GM12878 (cell line): ENCODE measurements at regions of chr12 and their contacts with region 1.

Region 1: GRCh38 chr12:91811481-91812287 is 334.0 kb downstream of the BTG1 start:
- DNase-seq: peak; percentile 40
- ATAC-seq: peak; percentile 95
- H3K4me3 ChIP-seq: no peak overlapping the region
- H3K27ac ChIP-seq: no peak overlapping the region
- H3K4me1 ChIP-seq: no peaks in the 10 kb centered on the region
- H3K27me3 ChIP-seq: no peaks in the 10 kb centered on the region
- CTCF ChIP-seq: peak; percentile 68 to 86 (median 79)
- EP300 ChIP-seq: no peak
- POLR2A ChIP-seq: no peak
- RAD21 ChIP-seq: peak; percentile 87

Region 2: GRCh38 chr12:91382081-91382543 is 429.6 kb before region 1 on chr12:
- CTCF ChIA-PET with region 1: interaction called, 23 read pairs
- POLR2A ChIA-PET with region 1: no interaction called
- RAD21 ChIA-PET with region 1: interaction called, 16 read pairs
- SMC1A ChIA-PET with region 1: interaction called, 17 read pairs
- in situ Hi-C with region 1: no loop called
- intact Hi-C with region 1: no loop called
- DNase-seq: peak; percentile 54
- ATAC-seq: peak; percentile 95
- H3K4me3 ChIP-seq: peak overlapping the region; percentile 68
- H3K27ac ChIP-seq: peak overlapping the region; percentile 37; the same call in 1 of the 2 replicates
- H3K4me1 ChIP-seq: peaks cover 3% of the 10 kb centered on the region; the same call in 1 of the 2 replicates
- H3K27me3 ChIP-seq: no peaks in the 10 kb centered on the region
- CTCF ChIP-seq: peak; percentile 80 to 89 (median 87)
- EP300 ChIP-seq: no peak
- POLR2A ChIP-seq: no peak
- RAD21 ChIP-seq: peak; percentile 92

Region 3: GRCh38 chr12:91801048-91801447 is 10.6 kb before region 1 on chr12:
- CTCF ChIA-PET with region 1: interaction called, 39 read pairs
- POLR2A ChIA-PET with region 1: no interaction called
- RAD21 ChIA-PET with region 1: interaction called, 7 read pairs
- SMC1A ChIA-PET with region 1: interaction called, 12 read pairs
- in situ Hi-C with region 1: no loop called
- intact Hi-C with region 1: no loop called
- DNase-seq: no peak
- ATAC-seq: no peak
- H3K4me3 ChIP-seq: no peak overlapping the region
- H3K27ac ChIP-seq: no peak overlapping the region
- H3K4me1 ChIP-seq: no peaks in the 10 kb centered on the region
- H3K27me3 ChIP-seq: no peaks in the 10 kb centered on the region
- CTCF ChIP-seq: no peak
- EP300 ChIP-seq: no peak
- POLR2A ChIP-seq: no peak
- RAD21 ChIP-seq: no peak

Region 4: GRCh38 chr12:91841822-91842221 is 30.1 kb after region 1 on chr12:
- CTCF ChIA-PET with region 1: interaction called, 13 read pairs
- POLR2A ChIA-PET with region 1: no interaction called
- RAD21 ChIA-PET with region 1: no interaction called
- SMC1A ChIA-PET with region 1: interaction called, 9 read pairs
- in situ Hi-C with region 1: no loop called
- intact Hi-C with region 1: no loop called
- DNase-seq: no peak
- ATAC-seq: no peak; the same call in 2 of the 3 replicates
- H3K4me3 ChIP-seq: no peak overlapping the region
- H3K27ac ChIP-seq: no peak overlapping the region
- H3K4me1 ChIP-seq: no peaks in the 10 kb centered on the region
- H3K27me3 ChIP-seq: no peaks in the 10 kb centered on the region
- CTCF ChIP-seq: no peak
- EP300 ChIP-seq: no peak
- POLR2A ChIP-seq: no peak
- RAD21 ChIP-seq: no peak

Region 5: GRCh38 chr12:91991399-91992187 is 179.9 kb after region 1 on chr12:
- CTCF ChIA-PET with region 1: interaction called, 13 read pairs
- POLR2A ChIA-PET with region 1: no interaction called
- RAD21 ChIA-PET with region 1: no interaction called
- SMC1A ChIA-PET with region 1: interaction called, 14 read pairs
- in situ Hi-C with region 1: no loop called
- intact Hi-C with region 1: no loop called
- DNase-seq: peak; percentile 32
- ATAC-seq: peak; percentile 94
- H3K4me3 ChIP-seq: no peak overlapping the region
- H3K27ac ChIP-seq: no peak overlapping the region
- H3K4me1 ChIP-seq: no peaks in the 10 kb centered on the region
- H3K27me3 ChIP-seq: no peaks in the 10 kb centered on the region
- CTCF ChIP-seq: peak in 2 of 3 experiments; percentile 35 to 56; a peak in 3 of 6 replicates
- EP300 ChIP-seq: no peak
- POLR2A ChIP-seq: no peak
- RAD21 ChIP-seq: peak; percentile 61

Region 6: GRCh38 chr12:92414170-92415070 is 602.7 kb after region 1 on chr12:
- CTCF ChIA-PET with region 1: interaction called, 5 read pairs
- POLR2A ChIA-PET with region 1: no interaction called
- RAD21 ChIA-PET with region 1: no interaction called
- SMC1A ChIA-PET with region 1: interaction called, 22 read pairs
- in situ Hi-C with region 1: loop called (anchors 10 kb)
- intact Hi-C with region 1: loop called (anchors 5 kb)
- DNase-seq: no peak
- ATAC-seq: no peak
- H3K4me3 ChIP-seq: no peak overlapping the region
- H3K27ac ChIP-seq: no peak overlapping the region
- H3K4me1 ChIP-seq: peaks cover 8% of the 10 kb centered on the region
- H3K27me3 ChIP-seq: no peaks in the 10 kb centered on the region
- CTCF ChIP-seq: no peak
- EP300 ChIP-seq: no peak
- POLR2A ChIP-seq: no peak
- RAD21 ChIP-seq: no peak